ENCODE measurements at regions of chr7 and their contacts with region 1.

Region 1: GRCh38 chr7:102860351-102860811 is 52.4 kb upstream of the LRRC17 start:
- DNase-seq: peak; percentile 43
- ATAC-seq: peak; percentile 47
- H3K4me3 ChIP-seq: no peak overlapping the region
- H3K27ac ChIP-seq: no peak overlapping the region
- H3K4me1 ChIP-seq: peaks cover 34% of the 10 kb centered on the region
- H3K27me3 ChIP-seq: no peaks in the 10 kb centered on the region
- CTCF ChIP-seq: no peak

Region 2: GRCh38 chr7:102834999-102835398 is 25.4 kb before region 1 on chr7:
- CTCF ChIA-PET with region 1: no interaction called
- POLR2A ChIA-PET with region 1: no interaction called
- intact Hi-C with region 1: no loop called
- DNase-seq: peak; percentile 81
- ATAC-seq: peak; percentile 87
- H3K4me3 ChIP-seq: peak overlapping the region; percentile 41; the same call in 1 of the 2 replicates
- H3K27ac ChIP-seq: peak overlapping the region; percentile 58
- H3K4me1 ChIP-seq: peaks cover 34% of the 10 kb centered on the region
- H3K27me3 ChIP-seq: no peaks in the 10 kb centered on the region
- CTCF ChIP-seq: no peak

Region 3: GRCh38 chr7:103065667-103066066 is 205.3 kb after region 1 on chr7:
- CTCF ChIA-PET with region 1: interaction called, 6 read pairs
- POLR2A ChIA-PET with region 1: no interaction called
- intact Hi-C with region 1: loop called (anchors 5 kb)
- DNase-seq: peak; percentile 62
- ATAC-seq: peak; percentile 69
- H3K4me3 ChIP-seq: no peak overlapping the region
- H3K27ac ChIP-seq: no peak overlapping the region
- H3K4me1 ChIP-seq: peaks cover 6% of the 10 kb centered on the region; the same call in 1 of the 2 replicates
- H3K27me3 ChIP-seq: no peaks in the 10 kb centered on the region
- CTCF ChIP-seq: peak; percentile 74

Measured in PC-3 (cell line).